Spleen (tissue), 13 donors: ENCODE measurements at regions of chr10 and their contacts with region 1.

Region 1: GRCh38 chr10:3482200-3483138 is 302.5 kb downstream of the KLF6 start:
- DNase-seq: no peak
- H3K4me3 ChIP-seq: peak overlapping the region in 1 of 8 donors; percentile 37
- H3K27ac ChIP-seq: peak overlapping the region in 2 of 8 donors; percentile 9 to 17
- H3K4me1 ChIP-seq: peaks cover 0 to 52% (median 34%) of the 10 kb centered on the region in 6 donors
- H3K27me3 ChIP-seq: no peaks in the 10 kb centered on the region
- CTCF ChIP-seq: no peak
- POLR2A ChIP-seq: no peak

Region 2: GRCh38 chr10:3538658-3539531 is 56.4 kb after region 1 on chr10:
- intact Hi-C with region 1: no loop called
- DNase-seq: no peak
- H3K4me3 ChIP-seq: no peak overlapping the region
- H3K27ac ChIP-seq: peak overlapping the region in 1 of 8 donors; percentile 56
- H3K4me1 ChIP-seq: no peaks in the 10 kb centered on the region
- H3K27me3 ChIP-seq: no peaks in the 10 kb centered on the region
- CTCF ChIP-seq: no peak
- POLR2A ChIP-seq: no peak

Region 3: GRCh38 chr10:3666525-3667302 is 184.2 kb after region 1 on chr10:
- intact Hi-C with region 1: no loop called
- DNase-seq: peak; percentile 90
- H3K4me3 ChIP-seq: peak overlapping the region in 1 of 8 donors; percentile 58
- H3K27ac ChIP-seq: peak overlapping the region in 7 of 8 donors; percentile 81 to 92 (median 89)
- H3K4me1 ChIP-seq: peaks cover 0 to 52% (median 23%) of the 10 kb centered on the region in 6 donors
- H3K27me3 ChIP-seq: no peaks in the 10 kb centered on the region
- CTCF ChIP-seq: no peak
- POLR2A ChIP-seq: no peak

Region 4: GRCh38 chr10:3785257-3785850 is 302.9 kb after region 1 on chr10:
- intact Hi-C with region 1: loop called (anchors 10 kb)
- DNase-seq: peak; percentile 98
- H3K4me3 ChIP-seq: peak overlapping the region; percentile 54 to 93 (median 74)
- H3K27ac ChIP-seq: peak overlapping the region; percentile 99 to 100 (median 100)
- H3K4me1 ChIP-seq: peaks cover 15 to 36% (median 29%) of the 10 kb centered on the region in 6 donors
- H3K27me3 ChIP-seq: no peaks in the 10 kb centered on the region
- CTCF ChIP-seq: peak in 2 of 11 experiments; percentile 14 to 27
- POLR2A ChIP-seq: peak; percentile 99 to 100 (median 100)